Activated CD4-positive, alpha-beta T cell treated with anti-CD3 and anti-CD28 coated beads for 36 hours (primary cell): ENCODE measurements at regions of chr5 and their contacts with region 1.

Region 1: DNA sequence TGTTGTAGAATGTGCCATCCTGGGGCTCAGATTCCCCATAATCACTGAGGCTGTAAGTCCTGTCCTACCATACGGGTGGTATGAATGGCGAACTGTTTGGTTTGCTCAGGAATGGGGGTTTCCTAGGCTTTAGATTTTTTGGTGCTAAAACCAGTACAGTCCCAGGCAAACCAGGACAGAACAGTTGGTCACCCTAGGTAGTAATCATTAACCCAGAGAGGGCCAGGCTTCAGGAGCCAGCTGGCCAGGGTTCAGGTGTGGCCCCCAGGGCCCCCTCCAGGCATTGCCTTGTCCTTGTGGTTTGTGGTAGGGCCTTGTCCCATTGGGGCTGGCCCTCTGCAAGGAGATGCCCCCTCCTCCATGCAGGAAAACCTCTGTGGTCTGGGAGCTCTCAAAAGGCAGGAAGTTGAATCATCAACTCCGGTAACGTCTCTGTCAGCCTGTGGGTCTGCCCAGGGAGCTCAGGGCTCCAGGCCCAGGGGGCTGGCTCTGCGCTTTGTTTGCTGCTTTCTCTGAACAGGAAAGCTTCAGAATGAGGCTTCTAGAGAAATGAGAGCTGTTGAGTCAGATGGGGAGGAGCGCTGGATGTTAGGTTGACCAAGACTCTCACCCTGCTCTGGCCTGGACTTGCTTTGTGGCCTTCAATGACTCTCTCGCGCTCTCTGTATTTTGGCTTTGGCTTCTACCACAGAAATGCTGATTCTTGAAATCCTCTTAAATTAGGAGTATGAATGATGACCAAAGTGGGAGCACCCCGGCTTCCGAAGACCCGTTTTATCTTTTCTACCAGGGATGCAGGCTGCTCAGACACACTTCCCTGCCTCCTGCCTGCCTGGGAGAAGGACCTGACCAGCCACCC is 22.2 kb upstream of the JADE2 start:
- DNase-seq: peak; percentile 89
- ATAC-seq: peak; percentile 98
- H3K4me3 Mint-ChIP-seq: peak overlapping the region; percentile 34
- H3K27ac Mint-ChIP-seq: peak overlapping the region; percentile 93
- H3K4me1 Mint-ChIP-seq: peaks cover 29% of the 10 kb centered on the region
- H3K27me3 Mint-ChIP-seq: no peaks in the 10 kb centered on the region

Region 2: DNA sequence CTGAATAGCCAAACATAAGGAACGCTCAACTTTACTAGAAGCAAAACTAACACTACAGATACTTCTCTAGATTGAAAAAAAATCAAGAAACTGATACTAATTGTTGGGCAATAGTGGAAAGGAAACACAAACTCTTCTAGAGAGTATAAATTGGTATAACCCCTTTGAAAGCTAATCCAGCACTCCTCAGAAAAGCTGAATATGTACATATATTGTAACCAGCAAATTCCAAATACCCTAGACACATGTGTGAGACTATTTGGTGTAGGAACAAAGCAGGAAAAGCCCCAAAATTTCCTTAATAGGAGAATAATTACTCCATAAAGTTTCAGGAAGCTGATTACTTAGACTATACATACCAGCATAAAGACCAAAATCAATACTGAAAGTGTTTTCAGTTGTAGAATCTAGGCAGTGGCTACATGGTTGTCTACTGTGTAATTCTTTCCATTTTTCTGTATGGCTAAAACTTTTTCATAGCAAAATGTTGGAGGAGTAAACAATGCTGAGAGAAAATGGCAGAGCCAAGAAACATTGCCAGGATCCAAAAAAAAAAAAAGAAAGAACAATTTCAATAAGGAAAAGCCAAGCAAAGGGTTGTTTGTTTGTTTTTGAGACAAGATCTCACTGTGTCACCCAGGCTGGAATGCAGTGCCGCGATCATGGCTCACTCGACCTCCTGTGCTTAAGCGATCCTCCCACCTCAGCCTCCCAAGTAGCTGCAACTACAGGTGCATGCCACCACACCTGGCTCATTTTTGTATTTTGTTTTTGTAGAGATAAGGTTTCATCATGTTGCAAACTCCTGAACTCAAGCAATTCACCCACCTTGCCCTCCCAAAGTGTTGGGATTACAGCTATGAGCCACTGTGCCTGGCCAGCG is 341.6 kb before region 1 on chr5:
- CTCF ChIA-PET with region 1: no interaction called
- POLR2A ChIA-PET with region 1: no interaction called
- intact Hi-C with region 1: no loop called
- DNase-seq: no peak
- ATAC-seq: peak; percentile 82
- H3K4me3 Mint-ChIP-seq: no peak overlapping the region
- H3K27ac Mint-ChIP-seq: peak overlapping the region; percentile 60
- H3K4me1 Mint-ChIP-seq: peaks cover 43% of the 10 kb centered on the region
- H3K27me3 Mint-ChIP-seq: no peaks in the 10 kb centered on the region

Region 3: DNA sequence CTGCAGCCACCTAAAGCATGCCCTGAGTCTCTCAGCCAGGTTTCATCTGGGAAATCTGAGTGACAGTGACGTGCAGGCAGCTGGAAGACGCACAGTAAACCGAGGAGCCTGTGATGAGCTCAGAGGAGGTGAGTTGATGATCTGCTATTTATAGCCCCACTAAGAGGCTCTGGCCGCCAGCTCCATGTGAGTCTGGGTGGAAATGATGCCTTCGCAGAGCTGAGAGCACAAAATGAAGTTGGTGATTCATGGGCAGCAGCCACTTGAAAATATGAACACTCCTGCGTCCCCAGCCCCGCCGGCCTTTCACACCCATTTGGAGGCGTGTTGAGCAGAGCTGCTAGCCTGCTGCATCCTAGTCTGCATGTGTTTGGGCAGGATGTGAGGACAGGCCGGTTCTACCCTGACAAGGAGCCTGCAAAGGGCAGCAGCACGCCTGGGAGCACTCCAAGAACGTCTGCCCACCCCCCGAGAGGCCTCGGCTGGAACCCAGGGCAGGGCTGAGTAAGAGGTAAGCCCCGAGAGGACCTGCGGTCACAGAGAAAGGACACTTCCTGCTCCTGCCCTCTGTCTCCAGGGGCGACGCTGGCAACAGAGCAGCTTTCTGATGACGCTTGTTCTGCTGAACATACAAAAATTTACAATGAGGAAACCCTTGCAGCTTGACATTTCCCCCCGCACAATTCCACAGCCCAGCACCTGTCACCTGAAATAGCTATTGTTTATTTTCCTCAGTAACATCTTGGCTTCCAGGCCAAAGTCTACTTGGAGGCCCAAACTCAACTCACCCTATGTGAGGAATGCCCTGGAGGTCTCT is 66.6 kb before region 1 on chr5:
- CTCF ChIA-PET with region 1: no interaction called
- POLR2A ChIA-PET with region 1: no interaction called
- intact Hi-C with region 1: loop called in 1 of 2 experiments (anchors 1 kb)
- DNase-seq: peak; percentile 78
- ATAC-seq: peak; percentile 80
- H3K4me3 Mint-ChIP-seq: no peak overlapping the region
- H3K27ac Mint-ChIP-seq: peak overlapping the region; percentile 32
- H3K4me1 Mint-ChIP-seq: peaks cover 35% of the 10 kb centered on the region
- H3K27me3 Mint-ChIP-seq: no peaks in the 10 kb centered on the region

Region 4: DNA sequence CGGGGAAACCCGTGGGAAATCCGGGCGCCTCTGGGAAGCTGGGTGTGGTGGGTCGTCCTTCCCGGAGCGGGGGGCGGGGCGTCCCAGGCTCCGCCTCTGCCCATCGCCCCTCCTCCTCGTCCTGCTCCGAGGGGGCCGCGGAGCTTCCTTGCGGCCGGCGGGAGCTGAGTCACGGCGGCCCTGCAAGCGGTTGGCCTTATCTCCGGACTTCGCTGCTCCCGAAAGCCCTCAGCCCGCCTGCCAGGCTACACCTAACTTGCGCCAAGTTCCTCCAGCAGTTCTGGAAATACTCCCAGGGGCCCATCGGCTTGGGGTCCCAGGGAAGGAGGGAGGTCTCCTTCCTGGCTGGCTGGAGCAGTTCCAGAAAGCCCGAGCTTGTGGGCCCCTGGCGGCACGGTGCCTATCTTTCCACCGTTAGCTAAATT is 37.5 kb before region 1 on chr5:
- CTCF ChIA-PET with region 1: no interaction called
- POLR2A ChIA-PET with region 1: no interaction called
- intact Hi-C with region 1: loop called in 1 of 2 experiments (anchors 1 kb)
- DNase-seq: peak; percentile 77
- ATAC-seq: peak; percentile 90
- H3K4me3 Mint-ChIP-seq: peak overlapping the region; percentile 74
- H3K27ac Mint-ChIP-seq: peak overlapping the region; percentile 71
- H3K4me1 Mint-ChIP-seq: peaks cover 14% of the 10 kb centered on the region
- H3K27me3 Mint-ChIP-seq: no peaks in the 10 kb centered on the region

Region 5: GRCh38 chr5:134637161-134637582 is 133.9 kb after region 1 on chr5:
- CTCF ChIA-PET with region 1: no interaction called
- POLR2A ChIA-PET with region 1: no interaction called
- intact Hi-C with region 1: no loop called
- DNase-seq: no peak
- ATAC-seq: no peak
- H3K4me3 Mint-ChIP-seq: no peak overlapping the region
- H3K27ac Mint-ChIP-seq: no peak overlapping the region
- H3K4me1 Mint-ChIP-seq: peaks cover 6% of the 10 kb centered on the region
- H3K27me3 Mint-ChIP-seq: no peaks in the 10 kb centered on the region

Region 6: DNA sequence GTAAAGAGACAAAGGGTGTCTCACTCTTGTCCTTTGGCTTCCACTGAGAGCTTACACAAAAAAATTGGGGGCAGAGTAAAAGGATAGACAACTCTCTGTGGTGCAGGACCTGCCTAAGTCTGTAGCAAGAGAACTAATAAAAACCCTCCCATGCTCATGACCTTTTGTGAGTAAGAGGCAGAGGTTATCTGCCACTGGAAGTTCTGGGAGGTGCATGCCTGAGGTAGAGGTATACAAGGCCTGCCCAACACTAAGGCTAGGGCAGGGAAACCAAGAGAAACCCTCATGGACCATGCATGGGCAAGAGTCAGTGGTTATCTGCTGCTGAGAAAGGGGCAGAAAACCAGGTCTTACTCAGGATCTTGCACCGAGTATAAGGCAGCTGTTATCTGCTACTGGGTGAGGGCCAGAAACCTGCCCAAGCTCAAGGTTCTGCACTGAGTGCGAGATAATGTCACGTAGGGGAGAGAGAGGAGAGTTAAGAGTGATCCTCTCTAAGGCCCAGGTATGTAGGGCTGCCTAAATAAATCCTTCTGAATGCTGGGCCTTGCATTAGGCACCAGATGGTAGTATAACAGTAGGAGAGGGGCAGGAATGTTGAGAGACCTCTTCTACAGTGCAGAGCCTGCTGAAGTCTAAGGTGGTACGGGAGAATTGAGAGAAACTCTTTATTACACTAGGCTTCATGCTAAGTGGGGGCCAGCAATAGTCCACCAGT is 752.3 kb after region 1 on chr5:
- CTCF ChIA-PET with region 1: no interaction called
- POLR2A ChIA-PET with region 1: no interaction called
- intact Hi-C with region 1: no loop called
- DNase-seq: no peak
- ATAC-seq: no peak
- H3K4me3 Mint-ChIP-seq: no peak overlapping the region
- H3K27ac Mint-ChIP-seq: no peak overlapping the region
- H3K4me1 Mint-ChIP-seq: no peaks in the 10 kb centered on the region
- H3K27me3 Mint-ChIP-seq: peaks cover 15% of the 10 kb centered on the region